ENCODE measurements at regions of chr14 and their contacts with region 1.

Region 1: DNA sequence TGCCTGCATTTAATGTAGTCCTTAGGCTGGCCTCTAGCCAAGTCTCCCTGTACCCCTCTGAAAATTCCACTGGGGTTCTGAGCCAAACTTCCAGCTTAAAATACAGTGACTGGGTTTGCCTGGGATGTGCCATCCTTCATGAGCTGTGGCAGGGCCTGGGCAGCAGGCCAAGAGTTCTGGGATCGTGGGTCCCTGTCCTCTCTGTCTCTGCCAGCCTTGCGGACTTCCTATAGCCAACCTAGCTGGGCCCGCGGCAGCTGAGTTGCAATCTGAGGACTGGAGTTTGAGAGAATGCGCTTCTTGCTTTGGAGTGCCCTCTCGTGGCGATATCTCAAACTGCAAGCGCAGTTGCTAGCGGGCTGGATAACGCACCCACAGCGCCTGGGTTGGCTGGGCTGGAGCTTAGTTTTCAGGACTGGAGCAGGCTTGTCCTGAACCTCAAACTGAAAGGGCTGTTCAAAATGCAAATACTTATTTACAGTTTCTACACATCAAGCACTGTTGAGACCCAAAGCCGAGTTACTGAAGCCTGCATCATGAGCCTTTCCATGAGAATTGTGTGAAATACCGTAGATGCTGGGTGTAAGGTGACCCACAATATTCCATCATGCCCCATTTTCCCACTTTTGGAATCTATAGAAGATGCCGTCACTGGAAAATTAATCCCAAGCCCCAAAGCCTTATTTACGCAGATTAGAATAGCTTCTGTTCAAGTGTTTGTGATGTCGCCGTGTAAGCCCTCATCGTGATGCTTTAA is 7.3 kb upstream of the IFI27L2 start:
- DNase-seq: peak; percentile 70 to 93 (median 84)
- ATAC-seq: peak; percentile 96
- H3K4me3 ChIP-seq: no peak overlapping the region
- H3K27ac ChIP-seq: no peak overlapping the region
- H3K4me1 ChIP-seq: peaks cover 0 to 2% of the 10 kb centered on the region in 2 donors
- H3K27me3 ChIP-seq: peaks cover 0 to 1% of the 10 kb centered on the region in 2 donors
- CTCF ChIP-seq: peak; percentile 94 to 97

Region 2: DNA sequence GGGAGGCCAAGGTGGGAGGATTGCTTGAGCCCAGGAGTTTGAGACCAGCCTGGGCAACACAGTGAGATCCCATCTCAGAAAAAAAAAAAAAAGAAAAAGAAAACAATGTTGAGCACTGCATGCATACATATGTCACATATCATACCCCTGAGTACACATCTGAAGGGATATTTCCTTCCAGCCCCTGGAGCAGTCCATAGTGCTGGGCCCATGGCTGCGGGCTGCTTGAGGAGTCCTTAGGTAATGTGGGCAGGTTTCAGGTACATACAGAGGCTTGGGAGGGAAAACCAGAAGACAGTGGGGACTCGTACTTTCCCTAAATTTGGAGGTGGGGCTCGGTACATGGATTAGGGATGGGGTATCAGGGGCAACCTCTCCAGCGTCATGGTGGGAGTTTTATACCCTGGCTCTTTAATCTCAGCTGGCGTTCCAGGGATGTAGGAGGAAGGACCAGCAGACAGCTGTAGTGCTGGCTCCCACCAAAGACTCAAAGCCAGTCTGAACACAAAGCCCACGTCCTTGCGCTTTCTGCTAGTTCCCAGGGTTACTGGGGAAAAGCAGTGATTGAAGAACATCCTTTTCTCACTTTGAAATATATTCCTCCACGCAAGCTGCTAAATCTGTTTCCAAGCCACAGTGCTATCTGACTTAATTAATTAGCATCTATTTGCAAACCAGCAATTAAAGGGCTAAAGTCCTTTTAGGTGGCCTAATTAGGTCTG is 105.4 kb before region 1 on chr14:
- intact Hi-C with region 1: loop called in 1 of 2 experiments (anchors 5 kb)
- DNase-seq: no peak
- ATAC-seq: no peak
- H3K4me3 ChIP-seq: no peak overlapping the region
- H3K27ac ChIP-seq: no peak overlapping the region
- H3K4me1 ChIP-seq: peaks cover 5 to 16% of the 10 kb centered on the region in 2 donors
- H3K27me3 ChIP-seq: no peaks in the 10 kb centered on the region
- CTCF ChIP-seq: no peak

Region 3: DNA sequence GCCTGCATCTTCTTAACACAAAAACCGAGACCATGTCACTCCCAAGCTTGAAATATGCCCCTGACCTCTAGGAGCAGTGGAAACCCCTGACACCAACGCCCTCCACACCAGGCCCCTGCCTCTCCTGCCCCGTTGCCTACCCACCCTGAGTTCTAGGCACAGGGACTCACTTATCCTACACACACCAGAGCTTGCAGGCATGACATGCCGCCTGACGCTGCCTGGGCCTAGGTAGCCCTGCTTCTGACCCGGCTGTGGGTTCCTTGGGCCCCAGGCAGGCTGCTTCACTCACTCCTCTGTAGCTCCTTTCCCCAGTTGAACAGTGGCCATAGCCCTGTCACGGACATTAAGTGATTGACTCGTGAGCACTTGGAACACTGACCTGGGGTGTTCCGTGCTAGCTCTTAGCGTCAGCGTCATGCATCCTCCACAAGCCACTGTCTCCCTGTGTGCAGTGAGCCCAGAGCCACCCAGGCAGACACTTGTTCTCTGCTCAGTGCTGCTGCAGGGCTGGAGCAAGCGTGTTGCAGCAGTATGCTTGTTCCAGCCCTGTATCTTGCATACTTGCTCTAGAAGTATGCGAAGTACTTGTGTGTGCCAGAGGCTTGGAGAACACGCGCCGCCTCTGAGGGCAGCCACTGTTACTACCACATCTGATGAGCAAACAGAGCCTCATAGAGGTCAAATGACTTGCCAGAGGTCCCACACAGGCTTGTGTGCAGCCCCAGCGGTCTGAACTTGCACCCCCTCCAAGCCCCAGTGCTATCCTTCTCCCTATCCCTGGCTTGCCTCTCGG is 95.0 kb before region 1 on chr14:
- intact Hi-C with region 1: loop called in 1 of 2 experiments (anchors 10 kb)
- DNase-seq: no peak
- ATAC-seq: peak; percentile 95
- H3K4me3 ChIP-seq: no peak overlapping the region
- H3K27ac ChIP-seq: no peak overlapping the region
- H3K4me1 ChIP-seq: peaks cover 3% of the 10 kb centered on the region in 2 donors
- H3K27me3 ChIP-seq: no peaks in the 10 kb centered on the region
- CTCF ChIP-seq: no peak

Region 4: DNA sequence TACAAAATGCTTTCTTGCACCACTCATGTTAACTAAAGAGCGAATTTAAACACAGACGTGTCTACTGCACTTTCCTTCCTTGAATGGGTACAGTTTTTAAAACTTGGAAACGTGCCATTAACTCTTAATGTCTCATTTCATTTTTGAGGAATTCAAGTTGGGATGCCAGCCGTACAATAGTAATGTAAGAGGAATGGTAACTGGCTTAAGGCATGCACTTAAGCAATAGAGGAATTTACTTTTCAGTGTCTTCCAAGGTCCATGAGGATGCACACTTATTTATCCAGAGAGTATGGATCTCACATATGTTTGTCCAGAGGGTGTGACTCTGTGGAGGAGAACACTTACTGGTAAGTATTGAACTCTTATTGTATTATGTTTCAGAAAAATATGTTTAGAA is 90.3 kb after region 1 on chr14:
- intact Hi-C with region 1: no loop called
- DNase-seq: no peak
- ATAC-seq: no peak
- H3K4me3 ChIP-seq: no peak overlapping the region
- H3K27ac ChIP-seq: no peak overlapping the region
- H3K4me1 ChIP-seq: no peaks in the 10 kb centered on the region
- H3K27me3 ChIP-seq: no peaks in the 10 kb centered on the region
- CTCF ChIP-seq: no peak